ENCODE measurements at regions of chr22 and their contacts with region 1.

Region 1: DNA sequence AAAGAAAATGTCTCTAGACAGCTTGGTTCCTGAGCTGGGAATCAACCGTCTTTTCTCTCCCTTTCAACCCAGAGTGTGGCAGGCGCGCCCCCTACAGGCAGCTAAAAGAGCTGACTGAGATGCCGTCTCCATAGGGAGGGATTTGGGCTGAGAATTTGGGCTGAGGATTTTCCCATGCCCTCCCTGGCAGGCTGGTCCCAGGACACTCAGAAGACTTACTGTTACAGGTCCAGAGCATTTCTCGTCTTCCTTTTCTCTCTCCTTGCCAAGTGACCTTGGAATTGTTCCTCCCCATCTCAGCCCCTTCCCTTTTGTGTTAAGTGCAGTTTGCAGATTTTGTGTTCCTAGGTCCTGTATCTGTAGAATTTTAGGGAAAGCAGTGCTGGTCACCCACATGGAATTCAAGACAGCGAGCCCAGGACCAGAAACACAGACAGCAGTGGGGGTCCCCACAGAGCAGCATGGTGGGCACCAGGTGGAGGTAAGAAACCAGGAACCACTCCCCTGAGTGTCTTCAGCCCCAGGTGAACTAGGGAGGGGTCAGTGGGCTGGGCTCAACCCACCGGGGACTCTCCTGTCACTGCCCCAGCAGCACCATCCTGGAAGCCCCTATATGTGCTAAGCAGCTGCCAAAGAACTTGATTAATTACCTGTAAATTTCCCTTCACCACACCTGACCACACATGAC is 9.9 kb upstream of the IGLL5 start:
- DNase-seq: peak; percentile 52
- H3K4me3 Mint-ChIP-seq: no peak overlapping the region
- H3K27ac Mint-ChIP-seq: no peak overlapping the region
- H3K4me1 Mint-ChIP-seq: no peaks in the 10 kb centered on the region
- H3K27me3 Mint-ChIP-seq: peaks cover 30% of the 10 kb centered on the region

Region 2: DNA sequence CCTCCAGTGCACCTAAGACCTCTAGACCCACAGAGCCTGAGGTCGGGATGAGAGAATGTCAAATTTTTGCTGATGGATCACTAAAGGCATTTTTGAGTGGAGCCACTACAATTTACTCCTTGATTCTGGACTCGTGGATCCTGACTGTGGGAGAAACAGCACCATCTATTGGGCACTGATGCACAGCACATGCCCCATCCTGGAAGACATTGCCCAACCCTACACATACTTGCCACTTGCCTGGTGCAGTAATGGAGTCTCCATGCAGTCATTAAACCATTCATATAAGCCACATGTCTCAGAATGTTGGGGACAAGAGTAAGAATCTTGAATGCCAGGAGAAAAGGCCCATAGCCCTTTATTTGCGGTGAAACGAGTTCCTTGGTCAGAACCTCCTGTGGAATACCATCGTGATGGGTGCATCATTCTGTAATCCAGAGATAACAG is 129.3 kb before region 1 on chr22:
- intact Hi-C with region 1: no loop called
- DNase-seq: no peak
- H3K4me3 Mint-ChIP-seq: no peak overlapping the region
- H3K27ac Mint-ChIP-seq: no peak overlapping the region
- H3K4me1 Mint-ChIP-seq: peaks cover 2% of the 10 kb centered on the region
- H3K27me3 Mint-ChIP-seq: peaks cover 10% of the 10 kb centered on the region

Region 3: DNA sequence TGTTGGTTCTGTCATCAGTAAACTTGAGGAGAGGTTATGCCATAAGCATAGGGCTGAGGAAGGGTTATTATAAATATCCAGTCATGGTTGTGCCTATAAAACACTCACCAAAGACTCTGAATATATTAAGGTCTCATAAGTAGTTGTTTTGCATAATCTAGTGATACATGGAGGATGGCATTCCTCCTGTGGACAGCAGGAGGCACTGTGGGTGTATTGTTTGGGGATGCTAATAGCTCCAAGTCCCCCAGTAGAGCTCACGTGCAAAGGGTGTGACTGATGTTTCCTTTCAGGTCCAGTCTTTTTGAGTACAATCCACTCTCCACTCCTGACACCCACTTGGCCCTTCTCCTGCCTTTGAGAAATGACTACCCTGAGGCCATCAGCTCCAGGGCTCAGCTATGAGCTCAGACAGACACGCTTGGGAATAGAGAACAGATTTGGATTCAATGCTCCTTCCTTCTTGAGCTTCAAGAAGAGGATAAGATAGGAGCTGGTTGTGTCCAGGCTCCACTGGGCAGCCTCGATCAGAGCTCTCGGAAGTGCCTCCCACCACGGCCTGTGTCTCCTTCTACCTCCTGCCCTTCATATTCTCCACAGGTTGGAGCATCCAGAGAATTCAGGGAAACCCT is 75.2 kb before region 1 on chr22:
- intact Hi-C with region 1: loop called (anchors 1 kb)
- DNase-seq: peak; percentile 22
- H3K4me3 Mint-ChIP-seq: no peak overlapping the region
- H3K27ac Mint-ChIP-seq: no peak overlapping the region
- H3K4me1 Mint-ChIP-seq: no peaks in the 10 kb centered on the region
- H3K27me3 Mint-ChIP-seq: peaks cover 32% of the 10 kb centered on the region

Region 4: GRCh38 chr22:22810018-22810427 is 67.6 kb before region 1 on chr22:
- intact Hi-C with region 1: loop called (anchors 1 kb)
- DNase-seq: peak; percentile 45
- H3K4me3 Mint-ChIP-seq: no peak overlapping the region
- H3K27ac Mint-ChIP-seq: no peak overlapping the region
- H3K4me1 Mint-ChIP-seq: no peaks in the 10 kb centered on the region
- H3K27me3 Mint-ChIP-seq: peaks cover 26% of the 10 kb centered on the region

Region 5: DNA sequence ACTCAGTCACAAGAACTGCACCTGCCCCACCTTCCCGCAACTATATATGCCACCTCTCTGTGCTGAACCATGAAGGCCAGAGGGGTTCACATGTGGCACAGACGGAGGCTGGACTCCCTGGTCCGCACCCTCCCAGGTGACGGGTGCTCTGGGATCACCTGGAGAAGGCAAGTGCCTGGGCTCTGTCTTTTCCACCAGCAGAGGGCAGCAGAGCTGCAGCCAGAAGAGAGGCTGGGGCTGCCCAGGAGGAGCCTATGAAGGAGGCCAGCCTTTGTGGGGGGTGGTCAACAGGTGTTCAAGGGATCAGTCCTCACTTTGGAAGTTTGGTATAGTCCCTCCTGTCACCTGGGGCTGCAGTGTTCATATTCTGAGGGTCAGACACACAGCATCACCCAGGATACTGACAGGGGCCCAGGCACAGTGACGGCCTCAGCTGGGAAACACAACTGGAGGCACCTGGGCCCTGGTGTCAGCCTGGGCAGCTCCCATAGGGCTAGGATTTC is 29.3 kb before region 1 on chr22:
- intact Hi-C with region 1: loop called (anchors 1 kb)
- DNase-seq: peak; percentile 49
- H3K4me3 Mint-ChIP-seq: no peak overlapping the region
- H3K27ac Mint-ChIP-seq: no peak overlapping the region
- H3K4me1 Mint-ChIP-seq: peaks cover 6% of the 10 kb centered on the region
- H3K27me3 Mint-ChIP-seq: peaks cover 43% of the 10 kb centered on the region

Region 6: DNA sequence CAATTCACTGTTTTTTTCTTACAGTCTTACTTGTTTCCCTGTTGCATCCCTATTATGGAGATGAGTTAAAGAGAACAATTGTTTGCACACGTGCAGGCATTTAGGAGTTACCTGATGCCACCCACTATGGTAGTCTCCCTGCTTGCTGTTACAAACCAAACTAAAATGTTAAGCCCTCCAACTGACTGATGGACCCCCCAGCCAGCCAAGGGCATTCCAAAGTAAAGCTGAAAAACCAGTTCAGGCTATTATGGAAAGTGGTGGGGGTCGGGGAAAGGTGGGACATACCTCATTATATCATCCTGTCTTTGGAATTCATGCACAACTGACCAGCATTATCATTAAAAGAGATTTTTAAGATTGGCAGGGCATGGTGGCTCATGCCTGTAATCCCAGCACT is 145.6 kb after region 1 on chr22:
- intact Hi-C with region 1: no loop called
- DNase-seq: no peak
- H3K4me3 Mint-ChIP-seq: no peak overlapping the region
- H3K27ac Mint-ChIP-seq: no peak overlapping the region
- H3K4me1 Mint-ChIP-seq: no peaks in the 10 kb centered on the region
- H3K27me3 Mint-ChIP-seq: peaks cover 9% of the 10 kb centered on the region

Measured in activated T-helper 1 cell treated with anti-CD3 and anti-CD28 coated beads, Interleukin-12 subunit alpha, Interleukin-12 subunit beta, Interleukin-2, Interleukin-4 antibody, amounts not matched to agents 30 ng/mL and 10 ng/mL and 1 ng/mL, durations not matched to agents 14 hours and 24 hours and 36 hours (primary cell).